ENCODE measurements at regions of chr22 and their contacts with region 1.

Region 1: GRCh38 chr22:42649246-42650099 is at the start of gene CYB5R3:
- DNase-seq: peak; percentile 58 to 79
- H3K4me3 ChIP-seq: peak within 1 kb of the TSS; percentile 88 to 98 (median 92)
- H3K27ac ChIP-seq: peak within 1 kb of the TSS; percentile 91 to 97
- H3K4me1 ChIP-seq: peaks cover 19 to 28% of the 10 kb centered on the region in 2 donors
- H3K27me3 ChIP-seq: no peaks in the 10 kb centered on the region
- CTCF ChIP-seq: no peak
- POLR2A ChIP-seq: no peak
- total RNA-seq, gene CYB5R3: 56.5 to 248 (median 87.5) TPM

Region 2: GRCh38 chr22:42604403-42604802 is 45.1 kb before region 1 on chr22:
- intact Hi-C with region 1: no loop called
- DNase-seq: peak in 1 of 2 donors; percentile 73
- H3K4me3 ChIP-seq: no peak overlapping the region
- H3K27ac ChIP-seq: peak overlapping the region; percentile 66 to 86
- H3K4me1 ChIP-seq: peaks cover 9 to 12% of the 10 kb centered on the region in 2 donors
- H3K27me3 ChIP-seq: no peaks in the 10 kb centered on the region
- CTCF ChIP-seq: no peak
- POLR2A ChIP-seq: no peak

Region 3: GRCh38 chr22:42614312-42615091 is 35.0 kb before region 1 on chr22 and contains the start of gene POLDIP3:
- intact Hi-C with region 1: no loop called
- DNase-seq: peak; percentile 99
- H3K4me3 ChIP-seq: peak within 1 kb of the TSS; percentile 70 to 92 (median 87)
- H3K27ac ChIP-seq: peak within 1 kb of the TSS; percentile 98
- H3K4me1 ChIP-seq: peaks cover 10 to 23% of the 10 kb centered on the region in 2 donors
- H3K27me3 ChIP-seq: no peaks in the 10 kb centered on the region
- CTCF ChIP-seq: peak; percentile 24 to 59 (median 40)
- POLR2A ChIP-seq: peak; percentile 59
- total RNA-seq, gene POLDIP3: 33.1 to 52.8 (median 38.3) TPM

Region 4: GRCh38 chr22:42697542-42698013 is 48.1 kb after region 1 on chr22:
- intact Hi-C with region 1: loop called (anchors 5 kb)
- DNase-seq: peak in 1 of 2 donors; percentile 62
- H3K4me3 ChIP-seq: no peak overlapping the region
- H3K27ac ChIP-seq: peak overlapping the region; percentile 71 to 82
- H3K4me1 ChIP-seq: no peaks in the 10 kb centered on the region
- H3K27me3 ChIP-seq: no peaks in the 10 kb centered on the region
- CTCF ChIP-seq: no peak
- POLR2A ChIP-seq: no peak

Region 5: DNA sequence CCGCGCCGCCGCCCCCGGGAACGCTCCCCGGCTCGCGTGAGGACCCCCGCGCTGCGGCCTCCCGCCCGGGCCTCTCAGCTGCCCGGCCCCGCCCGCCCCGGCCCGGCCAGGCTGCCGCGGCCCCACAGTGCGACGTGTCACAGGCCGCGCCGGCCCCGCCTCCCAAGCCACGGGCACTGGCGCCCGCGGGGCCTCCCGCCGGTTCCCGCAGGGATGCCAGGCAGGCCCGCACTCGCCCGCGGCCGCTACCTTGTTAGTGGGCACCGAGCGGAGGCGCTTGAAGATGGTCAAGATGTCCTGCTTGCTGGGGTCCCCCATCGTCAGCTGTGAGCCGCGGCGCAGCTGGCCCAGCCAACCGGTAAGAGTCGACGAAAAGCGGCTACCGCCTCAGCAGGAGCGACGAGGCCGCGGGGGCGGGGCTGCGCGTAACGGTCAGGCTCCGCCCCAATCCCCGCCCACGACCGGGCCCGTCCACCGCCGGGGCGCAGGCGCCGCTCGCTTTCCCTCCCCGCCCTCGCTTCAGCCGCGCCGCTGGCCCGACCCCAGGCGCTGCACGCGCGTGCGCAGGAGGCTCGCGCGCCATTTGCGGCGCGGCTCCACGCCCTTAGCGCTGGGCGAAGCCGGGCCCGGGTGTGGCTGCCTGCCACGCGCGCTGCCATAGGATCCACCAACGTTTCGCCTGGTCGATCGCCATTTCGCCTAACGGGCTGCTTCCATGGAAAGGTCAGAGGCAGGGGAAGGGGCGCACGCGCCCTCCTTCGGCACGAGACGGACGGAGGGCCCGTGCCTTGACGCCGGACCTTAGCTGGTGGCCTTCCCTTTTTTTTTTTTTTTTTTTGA is 207.6 kb after region 1 on chr22 and contains the start of gene ARFGAP3:
- intact Hi-C with region 1: loop called (anchors 5 kb)
- DNase-seq: peak; percentile 87 to 93
- H3K4me3 ChIP-seq: peak within 1 kb of the TSS; percentile 75 to 86 (median 80)
- H3K27ac ChIP-seq: peak within 1 kb of the TSS; percentile 95
- H3K4me1 ChIP-seq: peaks cover 0 to 7% of the 10 kb centered on the region in 2 donors
- H3K27me3 ChIP-seq: no peaks in the 10 kb centered on the region
- CTCF ChIP-seq: no peak
- POLR2A ChIP-seq: peak; percentile 64
- total RNA-seq, gene ARFGAP3: 51.2 to 90.7 (median 70.8) TPM

Measured in breast epithelium (tissue), 4 donors.